HEK293 (cell line): ENCODE measurements at regions of chr19 and their contacts with region 1.

Region 1: GRCh38 chr19:14381689-14382474 is 638 bp downstream of the ADGRE5 start:
- H3K4me3 ChIP-seq: peak overlapping the region; percentile 47
- H3K27ac ChIP-seq: peak overlapping the region; percentile 7; the same call in 1 of the 2 replicates
- H3K4me1 ChIP-seq: 0 out of 2 replicates have a peak, but pooled peaks cover 2% of the 10 kb centered on the region
- CTCF ChIP-seq: no peak

Region 2: GRCh38 chr19:13827244-13828030 is 554.4 kb before region 1 on chr19:
- CTCF ChIA-PET with region 1: no interaction called
- POLR2A ChIA-PET with region 1: no interaction called
- H3K4me3 ChIP-seq: no peak overlapping the region
- H3K27ac ChIP-seq: no peak overlapping the region
- H3K4me1 ChIP-seq: no peaks in the 10 kb centered on the region
- CTCF ChIP-seq: no peak

Region 3: GRCh38 chr19:14775869-14776586 is 394.1 kb after region 1 on chr19:
- CTCF ChIA-PET with region 1: no interaction called
- POLR2A ChIA-PET with region 1: interaction called, 10 read pairs
- H3K4me3 ChIP-seq: peak overlapping the region; percentile 32; the same call in 1 of the 2 replicates
- H3K27ac ChIP-seq: no peak overlapping the region
- H3K4me1 ChIP-seq: no peaks in the 10 kb centered on the region; the same call in 1 of the 2 replicates
- CTCF ChIP-seq: no peak